PC-3 (cell line): ENCODE measurements at regions of chr1 and their contacts with region 1.

Region 1: DNA sequence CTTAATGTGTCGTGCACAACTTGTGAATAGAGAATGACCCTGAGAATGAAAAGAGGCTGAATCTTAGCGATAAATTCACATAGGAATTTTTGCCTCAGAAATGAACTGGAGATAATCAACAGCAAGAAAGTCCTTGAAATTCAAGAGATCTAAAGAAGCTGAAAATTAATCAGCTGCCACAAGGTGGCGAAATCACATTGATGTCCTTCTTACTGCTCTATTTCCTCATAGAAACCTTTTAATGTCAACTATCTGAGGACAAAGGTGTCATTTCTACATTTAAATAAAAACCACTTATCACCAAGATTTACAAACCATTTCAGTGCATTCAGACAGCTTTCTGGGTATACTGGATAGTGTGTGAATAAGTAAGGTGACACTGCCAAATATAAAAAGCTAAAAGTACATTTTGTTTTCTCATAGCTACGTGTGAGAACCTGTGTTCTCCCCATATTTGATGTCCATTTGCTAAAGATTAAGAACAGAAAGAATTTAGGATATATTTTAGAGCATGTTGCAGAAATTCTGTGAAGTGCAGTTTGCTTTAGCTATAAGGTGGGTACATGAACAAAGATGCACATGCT is 485.3 kb upstream of the PTBP2 start:
- DNase-seq: peak; percentile 73
- ATAC-seq: 0 out of 2 replicates have a peak, but pooled peaks have one; percentile 33
- H3K4me3 ChIP-seq: no peak overlapping the region
- H3K27ac ChIP-seq: no peak overlapping the region
- H3K4me1 ChIP-seq: no peaks in the 10 kb centered on the region
- H3K27me3 ChIP-seq: no peaks in the 10 kb centered on the region
- CTCF ChIP-seq: peak; percentile 76

Region 2: GRCh38 chr1:96346708-96347107 is 110.5 kb after region 1 on chr1:
- CTCF ChIA-PET with region 1: no interaction called
- POLR2A ChIA-PET with region 1: no interaction called
- intact Hi-C with region 1: loop called (anchors 5 kb)
- DNase-seq: peak; percentile 16
- ATAC-seq: peak; percentile 42; the same call in 1 of the 2 replicates
- H3K4me3 ChIP-seq: no peak overlapping the region
- H3K27ac ChIP-seq: no peak overlapping the region
- H3K4me1 ChIP-seq: no peaks in the 10 kb centered on the region
- H3K27me3 ChIP-seq: no peaks in the 10 kb centered on the region
- CTCF ChIP-seq: peak; percentile 34; the same call in 1 of the 2 replicates

Region 3: GRCh38 chr1:96445302-96445701 is 209.1 kb after region 1 on chr1:
- CTCF ChIA-PET with region 1: no interaction called
- POLR2A ChIA-PET with region 1: no interaction called
- intact Hi-C with region 1: loop called (anchors 10 kb)
- DNase-seq: no peak
- ATAC-seq: no peak
- H3K4me3 ChIP-seq: no peak overlapping the region
- H3K27ac ChIP-seq: no peak overlapping the region
- H3K4me1 ChIP-seq: no peaks in the 10 kb centered on the region
- H3K27me3 ChIP-seq: no peaks in the 10 kb centered on the region
- CTCF ChIP-seq: no peak

Region 4: GRCh38 chr1:96508233-96508632 is 272.0 kb after region 1 on chr1:
- CTCF ChIA-PET with region 1: no interaction called
- POLR2A ChIA-PET with region 1: no interaction called
- intact Hi-C with region 1: loop called (anchors 10 kb)
- DNase-seq: no peak
- ATAC-seq: 0 out of 2 replicates have a peak, but pooled peaks have one; percentile 27
- H3K4me3 ChIP-seq: no peak overlapping the region
- H3K27ac ChIP-seq: no peak overlapping the region
- H3K4me1 ChIP-seq: peaks cover 10% of the 10 kb centered on the region
- H3K27me3 ChIP-seq: no peaks in the 10 kb centered on the region
- CTCF ChIP-seq: no peak

Region 5: DNA sequence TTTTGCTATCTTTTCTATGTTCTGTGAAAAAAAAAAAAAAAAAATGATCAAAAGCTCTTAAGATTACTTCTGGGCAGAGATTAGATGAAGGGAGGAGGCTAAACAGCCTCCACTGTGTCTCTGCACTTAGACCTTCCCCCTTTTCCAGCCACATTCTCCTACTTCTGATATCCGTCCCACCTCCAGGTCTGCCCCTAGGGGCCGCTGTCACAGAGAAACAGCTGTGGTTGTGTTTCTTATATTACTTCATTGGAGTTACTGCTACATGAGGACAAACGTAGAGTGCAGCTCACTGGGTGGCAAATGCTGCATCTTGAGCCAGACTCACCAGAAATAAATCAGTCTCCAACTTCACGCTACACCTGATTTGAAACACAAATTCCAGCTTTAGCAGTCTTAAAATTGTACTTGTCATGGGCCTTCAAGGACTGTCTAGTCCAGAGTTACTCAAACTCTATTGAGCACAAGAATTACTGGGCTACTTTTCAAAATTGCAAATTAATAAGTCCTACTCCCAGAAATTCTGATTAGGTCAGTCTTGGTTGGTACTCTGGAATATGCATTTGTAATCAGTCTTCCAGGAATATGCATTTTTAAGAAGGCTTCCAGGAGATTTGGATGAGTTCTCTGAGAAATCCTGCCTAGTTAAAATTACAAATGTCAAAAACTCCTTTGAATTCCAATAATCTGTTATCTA is 360.1 kb after region 1 on chr1:
- CTCF ChIA-PET with region 1: no interaction called
- POLR2A ChIA-PET with region 1: no interaction called
- intact Hi-C with region 1: loop called (anchors 10 kb)
- DNase-seq: peak; percentile 55
- ATAC-seq: peak; percentile 64
- H3K4me3 ChIP-seq: no peak overlapping the region
- H3K27ac ChIP-seq: no peak overlapping the region
- H3K4me1 ChIP-seq: no peaks in the 10 kb centered on the region
- H3K27me3 ChIP-seq: peaks cover 4% of the 10 kb centered on the region; the same call in 1 of the 2 replicates
- CTCF ChIP-seq: peak; percentile 83

Region 6: GRCh38 chr1:96741335-96741734 is 505.1 kb after region 1 on chr1:
- CTCF ChIA-PET with region 1: no interaction called
- POLR2A ChIA-PET with region 1: no interaction called
- intact Hi-C with region 1: loop called (anchors 10 kb)
- DNase-seq: no peak
- ATAC-seq: no peak
- H3K4me3 ChIP-seq: no peak overlapping the region
- H3K27ac ChIP-seq: no peak overlapping the region
- H3K4me1 ChIP-seq: no peaks in the 10 kb centered on the region
- H3K27me3 ChIP-seq: no peaks in the 10 kb centered on the region
- CTCF ChIP-seq: no peak

Region 7: GRCh38 chr1:96845464-96845863 is 609.2 kb after region 1 on chr1:
- CTCF ChIA-PET with region 1: no interaction called
- POLR2A ChIA-PET with region 1: no interaction called
- intact Hi-C with region 1: loop called (anchors 5 kb)
- DNase-seq: peak; percentile 54
- ATAC-seq: peak; percentile 91
- H3K4me3 ChIP-seq: no peak overlapping the region
- H3K27ac ChIP-seq: no peak overlapping the region
- H3K4me1 ChIP-seq: no peaks in the 10 kb centered on the region
- H3K27me3 ChIP-seq: no peaks in the 10 kb centered on the region
- CTCF ChIP-seq: peak; percentile 87

Region 8: GRCh38 chr1:97034651-97035050 is 798.4 kb after region 1 on chr1:
- CTCF ChIA-PET with region 1: no interaction called
- POLR2A ChIA-PET with region 1: no interaction called
- intact Hi-C with region 1: no loop called
- DNase-seq: no peak
- ATAC-seq: no peak
- H3K4me3 ChIP-seq: no peak overlapping the region
- H3K27ac ChIP-seq: no peak overlapping the region
- H3K4me1 ChIP-seq: no peaks in the 10 kb centered on the region
- H3K27me3 ChIP-seq: no peaks in the 10 kb centered on the region
- CTCF ChIP-seq: no peak